ENCODE measurements at regions of chr1 and their contacts with region 1.

Region 1: GRCh38 chr1:173451981-173452380 is 25.2 kb upstream of the PRDX6 start:
- DNase-seq: no peak
- H3K4me3 ChIP-seq: no peak overlapping the region
- H3K27ac ChIP-seq: no peak overlapping the region
- H3K4me1 ChIP-seq: no peaks in the 10 kb centered on the region
- H3K27me3 ChIP-seq: no peaks in the 10 kb centered on the region
- CTCF ChIP-seq: no peak

Region 2: GRCh38 chr1:173429471-173430402 is 22.2 kb before region 1 on chr1:
- CTCF ChIA-PET with region 1: no interaction called
- POLR2A ChIA-PET with region 1: no interaction called
- intact Hi-C with region 1: no loop called
- DNase-seq: peak; percentile 92
- H3K4me3 ChIP-seq: peak overlapping the region; percentile 26
- H3K27ac ChIP-seq: peak overlapping the region; percentile 74
- H3K4me1 ChIP-seq: peaks cover 24% of the 10 kb centered on the region
- H3K27me3 ChIP-seq: no peaks in the 10 kb centered on the region
- CTCF ChIP-seq: peak; percentile 93

Region 3: DNA sequence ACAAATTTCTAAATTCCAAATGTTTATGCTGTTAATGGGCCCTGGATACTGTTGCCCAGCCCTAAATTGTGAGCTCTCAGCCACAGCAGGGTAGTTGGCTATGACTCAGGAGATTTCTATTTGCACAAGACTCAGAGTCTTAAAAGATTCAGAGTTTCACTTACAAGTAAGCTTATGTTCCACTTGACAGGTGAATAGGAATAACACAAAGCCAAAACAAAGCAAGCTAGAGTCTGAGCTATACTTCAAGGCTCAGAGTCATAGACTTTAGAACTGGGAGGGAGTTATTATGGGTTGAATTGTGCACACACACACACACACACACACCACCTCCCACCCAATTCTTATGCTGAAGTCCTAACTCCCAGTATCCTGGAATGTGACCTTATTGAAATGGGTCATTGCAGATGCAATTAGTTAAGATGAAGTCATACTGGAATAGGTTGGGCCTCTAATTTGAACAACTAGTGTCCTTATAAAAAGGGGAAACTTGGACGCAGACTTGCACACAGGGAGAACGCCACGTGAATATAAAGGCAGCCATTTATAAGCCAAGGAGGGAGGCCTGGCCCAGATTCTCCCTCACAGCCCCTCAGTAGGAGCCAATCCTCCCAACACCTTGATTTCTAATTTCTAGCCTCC is 55.3 kb after region 1 on chr1:
- CTCF ChIA-PET with region 1: no interaction called
- POLR2A ChIA-PET with region 1: no interaction called
- intact Hi-C with region 1: no loop called
- DNase-seq: peak; percentile 69
- H3K4me3 ChIP-seq: no peak overlapping the region
- H3K27ac ChIP-seq: no peak overlapping the region
- H3K4me1 ChIP-seq: peaks cover 18% of the 10 kb centered on the region
- H3K27me3 ChIP-seq: no peaks in the 10 kb centered on the region
- CTCF ChIP-seq: no peak

Region 4: GRCh38 chr1:173603056-173603620 is 151.2 kb after region 1 on chr1 and contains the start of gene SLC9C2:
- CTCF ChIA-PET with region 1: no interaction called
- POLR2A ChIA-PET with region 1: no interaction called
- intact Hi-C with region 1: loop called (anchors 10 kb)
- DNase-seq: peak; percentile 21
- H3K4me3 ChIP-seq: no peak within 1 kb of the TSS
- H3K27ac ChIP-seq: no peak within 1 kb of the TSS
- H3K4me1 ChIP-seq: no peaks in the 10 kb centered on the region
- H3K27me3 ChIP-seq: no peaks in the 10 kb centered on the region
- CTCF ChIP-seq: no peak
- total RNA-seq, gene SLC9C2: not detected in 2 replicates